Breast epithelium (tissue), 4 donors: ENCODE measurements at regions of chr17 and their contacts with region 1.

Region 1: DNA sequence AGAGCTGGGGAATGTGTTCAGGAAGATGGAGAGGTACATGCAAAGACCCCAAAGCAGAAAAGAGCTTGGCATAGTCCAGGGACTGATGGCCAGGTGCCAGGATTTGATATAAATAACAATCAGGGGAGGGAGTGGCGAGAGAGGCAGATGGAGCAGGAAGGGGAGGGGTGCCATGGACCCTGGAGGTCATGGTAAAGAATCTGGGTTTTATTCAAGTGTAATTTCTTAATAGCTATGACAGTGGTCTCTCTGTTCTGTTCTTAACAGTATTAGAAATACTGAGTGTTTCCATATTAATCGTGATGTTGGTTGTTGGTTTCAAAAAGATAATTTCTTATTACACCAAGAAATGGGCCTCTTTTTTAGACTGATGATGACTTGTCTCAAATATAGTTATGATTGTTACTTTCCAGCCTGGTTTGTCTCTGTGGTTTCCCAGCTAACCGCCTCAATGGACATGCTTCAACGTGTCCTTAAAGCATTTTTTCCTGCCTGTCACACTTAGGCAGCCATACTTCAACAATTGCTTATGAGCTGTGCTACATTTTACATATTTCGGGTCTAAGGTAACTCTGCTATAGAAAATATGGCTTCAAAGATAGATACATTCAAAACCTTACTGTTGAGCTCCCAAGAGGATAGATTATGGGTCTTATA is 49.4 kb downstream of the MYH10 start:
- DNase-seq: no peak
- H3K4me3 ChIP-seq: no peak overlapping the region
- H3K27ac ChIP-seq: peak overlapping the region in 1 of 2 donors; percentile 54
- H3K4me1 ChIP-seq: no peaks in the 10 kb centered on the region
- H3K27me3 ChIP-seq: no peaks in the 10 kb centered on the region
- CTCF ChIP-seq: no peak
- POLR2A ChIP-seq: no peak

Region 2: GRCh38 chr17:8739097-8739496 is 158.0 kb after region 1 on chr17:
- intact Hi-C with region 1: loop called (anchors 5 kb)
- DNase-seq: no peak
- H3K4me3 ChIP-seq: no peak overlapping the region
- H3K27ac ChIP-seq: no peak overlapping the region
- H3K4me1 ChIP-seq: no peaks in the 10 kb centered on the region
- H3K27me3 ChIP-seq: no peaks in the 10 kb centered on the region
- CTCF ChIP-seq: no peak
- POLR2A ChIP-seq: no peak

Region 3: GRCh38 chr17:9064311-9064844 is 483.2 kb after region 1 on chr17:
- intact Hi-C with region 1: no loop called
- DNase-seq: no peak
- H3K4me3 ChIP-seq: no peak overlapping the region
- H3K27ac ChIP-seq: no peak overlapping the region
- H3K4me1 ChIP-seq: no peaks in the 10 kb centered on the region
- H3K27me3 ChIP-seq: no peaks in the 10 kb centered on the region
- CTCF ChIP-seq: no peak
- POLR2A ChIP-seq: no peak